ENCODE measurements at regions of chr10 and their contacts with region 1.

Region 1: GRCh38 chr10:93916257-93917063 is 22.7 kb downstream of the SLC35G1 start:
- DNase-seq: no peak
- H3K4me3 Mint-ChIP-seq: no peak overlapping the region
- H3K27ac Mint-ChIP-seq: no peak overlapping the region
- H3K4me1 Mint-ChIP-seq: no peaks in the 10 kb centered on the region
- H3K27me3 Mint-ChIP-seq: no peaks in the 10 kb centered on the region

Region 2: DNA sequence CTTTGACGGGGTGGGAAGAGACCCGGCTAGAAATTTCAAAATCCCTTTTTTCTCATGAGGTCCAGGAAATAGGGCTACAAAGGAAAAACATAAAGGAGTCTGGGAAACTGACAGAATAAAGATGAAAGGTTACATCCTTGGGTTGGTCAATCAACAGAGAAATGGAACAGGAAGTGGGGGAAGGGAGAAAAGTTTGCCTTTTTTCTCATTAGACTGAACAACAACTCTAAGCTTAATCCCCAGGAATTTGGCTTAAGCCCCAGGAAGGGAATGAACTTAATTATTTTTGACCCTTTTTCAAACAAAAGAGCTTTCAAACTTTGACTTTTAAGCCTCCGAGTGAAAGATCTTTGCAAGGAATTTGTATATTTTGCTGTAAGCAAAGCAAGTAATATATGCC is 126.0 kb before region 1 on chr10:
- CTCF ChIA-PET with region 1: no interaction called
- DNase-seq: no peak
- H3K4me3 Mint-ChIP-seq: no peak overlapping the region
- H3K27ac Mint-ChIP-seq: no peak overlapping the region
- H3K4me1 Mint-ChIP-seq: no peaks in the 10 kb centered on the region
- H3K27me3 Mint-ChIP-seq: peaks cover 10% of the 10 kb centered on the region

Region 3: DNA sequence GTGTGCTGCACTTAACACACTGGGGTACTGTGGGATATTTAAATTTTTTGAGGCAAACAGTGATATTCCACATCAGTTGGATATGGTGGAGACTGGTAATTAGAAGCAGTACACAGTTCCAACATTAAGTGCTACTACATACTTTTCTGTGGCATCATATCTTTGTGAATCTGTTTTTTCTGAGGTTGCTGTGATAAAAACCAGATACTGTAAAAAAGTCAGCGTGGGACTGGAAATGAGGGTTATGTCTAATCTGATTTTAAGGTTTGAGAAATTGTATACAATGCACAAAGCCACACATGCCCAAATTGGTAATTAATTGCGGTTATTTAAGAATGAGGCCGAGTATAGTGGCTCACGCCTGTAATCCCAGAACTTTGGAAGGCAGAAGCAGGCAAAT is 527.1 kb after region 1 on chr10:
- CTCF ChIA-PET with region 1: interaction called, 11 read pairs
- DNase-seq: no peak
- H3K4me3 Mint-ChIP-seq: no peak overlapping the region
- H3K27ac Mint-ChIP-seq: no peak overlapping the region
- H3K4me1 Mint-ChIP-seq: no peaks in the 10 kb centered on the region
- H3K27me3 Mint-ChIP-seq: peaks cover 3% of the 10 kb centered on the region

Measured in activated naive CD4-positive, alpha-beta T cell treated with anti-CD3 and anti-CD28 coated beads, Interleukin-2, amount 10 ng/mL, durations not matched to agents 7 days and 5 days (primary cell).